H1 (cell line): ENCODE measurements at regions of chr5 and their contacts with region 1.

Region 1: GRCh38 chr5:1174122-1174936 is 27.1 kb upstream of the SLC6A19 start:
- DNase-seq: peak in 1 of 2 experiments; percentile 90
- H3K4me3 ChIP-seq: no peak overlapping the region
- H3K27ac ChIP-seq: no peak overlapping the region
- H3K4me1 ChIP-seq: 0 out of 7 replicates have a peak, but pooled peaks cover 0 to 4% (median 0%) of the 10 kb centered on the region in 4 experiments
- H3K27me3 ChIP-seq: no peaks in the 10 kb centered on the region; a peak in 1 of 7 replicates
- CTCF ChIP-seq: peak in 2 of 3 experiments; percentile 89 to 95; a peak in 3 of 4 replicates
- EP300 ChIP-seq: no peak
- POLR2A ChIP-seq: no peak
- RAD21 ChIP-seq: peak; percentile 78 to 80

Region 2: DNA sequence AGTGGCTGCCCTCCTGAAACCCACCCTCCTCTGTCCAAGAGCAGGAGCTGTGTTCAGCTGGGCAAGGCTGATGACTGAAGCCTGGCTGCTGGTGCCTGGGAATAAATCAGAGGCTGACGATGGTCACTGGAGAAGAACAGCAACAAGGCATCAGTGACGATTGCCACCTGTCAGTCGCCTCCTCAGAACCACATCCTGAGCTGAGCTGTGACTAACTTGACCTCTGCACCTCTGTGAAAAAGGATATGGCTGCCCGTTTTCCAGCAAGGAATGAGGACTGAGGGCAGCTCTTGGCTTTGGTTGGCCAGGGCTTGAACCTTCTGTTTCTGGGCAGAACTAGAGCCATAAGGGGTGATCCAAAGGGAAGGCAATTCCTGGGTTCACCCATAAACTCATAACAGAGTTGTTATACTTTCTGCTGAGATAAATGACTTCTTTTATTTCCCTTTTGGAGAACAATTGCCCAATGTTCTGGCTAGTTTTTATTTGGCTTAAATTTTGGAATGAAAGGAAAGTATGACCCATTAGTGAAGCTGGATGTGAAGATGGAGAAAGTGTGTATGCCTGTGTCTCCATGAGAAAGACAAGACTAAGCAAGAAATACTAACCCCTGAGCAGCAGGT is 241.6 kb before region 1 on chr5:
- CTCF ChIA-PET with region 1: interaction called, 20 read pairs
- POLR2A ChIA-PET with region 1: no interaction called
- DNase-seq: no peak
- H3K4me3 ChIP-seq: no peak overlapping the region
- H3K27ac ChIP-seq: no peak overlapping the region
- H3K4me1 ChIP-seq: no peaks in the 10 kb centered on the region
- H3K27me3 ChIP-seq: no peaks in the 10 kb centered on the region
- CTCF ChIP-seq: no peak
- EP300 ChIP-seq: no peak
- POLR2A ChIP-seq: no peak
- RAD21 ChIP-seq: no peak

Region 3: GRCh38 chr5:945691-946551 is 228.4 kb before region 1 on chr5:
- CTCF ChIA-PET with region 1: interaction called, 14 read pairs
- POLR2A ChIA-PET with region 1: no interaction called
- DNase-seq: peak in 1 of 2 experiments; percentile 42
- H3K4me3 ChIP-seq: no peak overlapping the region
- H3K27ac ChIP-seq: no peak overlapping the region
- H3K4me1 ChIP-seq: peaks cover 0 to 4% (median 0%) of the 10 kb centered on the region in 4 experiments; a peak in 2 of 7 replicates
- H3K27me3 ChIP-seq: peaks cover 0 to 6% (median 4%) of the 10 kb centered on the region in 4 experiments; a peak in 4 of 7 replicates
- CTCF ChIP-seq: no peak
- EP300 ChIP-seq: no peak
- POLR2A ChIP-seq: no peak
- RAD21 ChIP-seq: no peak

Region 4: GRCh38 chr5:1161833-1162229 is 12.5 kb before region 1 on chr5:
- CTCF ChIA-PET with region 1: interaction called, 29 read pairs
- POLR2A ChIA-PET with region 1: no interaction called
- DNase-seq: no peak
- H3K4me3 ChIP-seq: no peak overlapping the region
- H3K27ac ChIP-seq: no peak overlapping the region
- H3K4me1 ChIP-seq: 0 out of 7 replicates have a peak, but pooled peaks cover 0 to 3% (median 0%) of the 10 kb centered on the region in 4 experiments
- H3K27me3 ChIP-seq: peaks cover 4 to 8% (median 7%) of the 10 kb centered on the region in 4 experiments
- CTCF ChIP-seq: no peak
- EP300 ChIP-seq: no peak
- POLR2A ChIP-seq: no peak
- RAD21 ChIP-seq: no peak

Region 5: DNA sequence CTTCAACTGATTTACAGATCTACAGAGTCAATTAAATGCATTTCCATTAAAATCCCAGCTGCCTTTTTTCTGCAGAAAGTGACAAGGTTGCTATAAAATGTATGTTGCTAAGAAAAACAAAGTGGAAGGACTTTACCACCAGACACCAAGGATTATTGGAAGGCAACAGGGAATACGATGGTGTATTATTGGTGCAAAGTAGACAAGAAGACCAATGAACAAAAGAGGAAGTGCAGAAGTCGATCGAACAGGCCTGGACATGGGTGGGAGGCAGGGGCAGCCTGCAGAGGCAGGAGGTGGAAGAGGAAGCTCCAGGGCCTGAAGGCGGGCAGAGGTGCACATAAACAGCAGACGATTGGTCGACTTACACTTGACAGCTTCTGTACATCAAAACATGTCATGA is 16.5 kb after region 1 on chr5:
- CTCF ChIA-PET with region 1: interaction called, 30 read pairs
- POLR2A ChIA-PET with region 1: no interaction called
- DNase-seq: no peak
- H3K4me3 ChIP-seq: no peak overlapping the region
- H3K27ac ChIP-seq: no peak overlapping the region
- H3K4me1 ChIP-seq: peaks cover 0 to 3% (median 0%) of the 10 kb centered on the region in 4 experiments; a peak in 1 of 7 replicates
- H3K27me3 ChIP-seq: no peaks in the 10 kb centered on the region
- CTCF ChIP-seq: no peak
- EP300 ChIP-seq: no peak
- POLR2A ChIP-seq: no peak
- RAD21 ChIP-seq: no peak

Region 6: DNA sequence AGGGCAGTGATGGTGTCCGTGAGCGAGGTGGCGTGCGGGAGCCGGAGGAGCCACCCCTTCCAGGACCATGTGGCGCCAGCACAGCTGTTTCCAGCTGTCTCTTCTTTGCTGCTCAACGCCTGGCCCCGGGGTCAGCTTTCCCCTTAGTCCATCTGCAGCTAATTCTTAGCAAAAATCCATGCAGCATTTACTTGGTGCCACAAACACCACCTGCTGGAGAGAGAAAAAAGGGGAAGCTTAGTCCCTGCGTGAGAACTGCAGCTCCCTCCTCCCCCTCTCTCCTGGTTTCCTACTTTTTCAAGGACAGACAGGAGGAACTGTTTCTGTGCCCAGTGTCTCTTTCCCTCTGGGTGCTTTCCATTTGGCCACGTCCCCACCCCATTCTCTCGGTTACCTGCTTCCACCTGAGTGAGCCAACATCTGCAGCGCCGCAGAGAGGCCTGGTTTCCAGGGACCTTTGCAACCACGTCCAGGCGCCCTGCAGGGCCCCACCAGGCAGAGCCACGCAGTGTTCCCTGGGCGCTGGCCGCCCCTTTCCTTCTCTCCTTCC is 30.4 kb after region 1 on chr5:
- CTCF ChIA-PET with region 1: interaction called, 15 read pairs
- POLR2A ChIA-PET with region 1: no interaction called
- DNase-seq: no peak
- H3K4me3 ChIP-seq: no peak overlapping the region
- H3K27ac ChIP-seq: no peak overlapping the region
- H3K4me1 ChIP-seq: peaks cover 0 to 3% (median 0%) of the 10 kb centered on the region in 4 experiments; a peak in 1 of 7 replicates
- H3K27me3 ChIP-seq: no peaks in the 10 kb centered on the region; a peak in 1 of 7 replicates
- CTCF ChIP-seq: peak in 1 of 3 experiments; percentile 17; a peak in 1 of 4 replicates
- EP300 ChIP-seq: no peak
- POLR2A ChIP-seq: no peak
- RAD21 ChIP-seq: peak; percentile 14 to 16; a peak in 2 of 4 replicates

Region 7: GRCh38 chr5:1488943-1489680 is 314.8 kb after region 1 on chr5:
- CTCF ChIA-PET with region 1: no interaction called
- POLR2A ChIA-PET with region 1: no interaction called
- DNase-seq: no peak
- H3K4me3 ChIP-seq: no peak overlapping the region
- H3K27ac ChIP-seq: no peak overlapping the region
- H3K4me1 ChIP-seq: no peaks in the 10 kb centered on the region
- H3K27me3 ChIP-seq: no peaks in the 10 kb centered on the region
- CTCF ChIP-seq: no peak
- EP300 ChIP-seq: no peak
- POLR2A ChIP-seq: no peak
- RAD21 ChIP-seq: no peak